PC-3 (cell line): ENCODE measurements at regions of chr1 and their contacts with region 1.

Region 1: GRCh38 chr1:172429331-172430127 is 9.0 kb downstream of the C1orf105 start:
- DNase-seq: peak; percentile 99
- ATAC-seq: peak; percentile 76
- H3K4me3 ChIP-seq: no peak overlapping the region
- H3K27ac ChIP-seq: no peak overlapping the region
- H3K4me1 ChIP-seq: peaks cover 20% of the 10 kb centered on the region
- H3K27me3 ChIP-seq: no peaks in the 10 kb centered on the region
- CTCF ChIP-seq: peak; percentile 100

Region 2: DNA sequence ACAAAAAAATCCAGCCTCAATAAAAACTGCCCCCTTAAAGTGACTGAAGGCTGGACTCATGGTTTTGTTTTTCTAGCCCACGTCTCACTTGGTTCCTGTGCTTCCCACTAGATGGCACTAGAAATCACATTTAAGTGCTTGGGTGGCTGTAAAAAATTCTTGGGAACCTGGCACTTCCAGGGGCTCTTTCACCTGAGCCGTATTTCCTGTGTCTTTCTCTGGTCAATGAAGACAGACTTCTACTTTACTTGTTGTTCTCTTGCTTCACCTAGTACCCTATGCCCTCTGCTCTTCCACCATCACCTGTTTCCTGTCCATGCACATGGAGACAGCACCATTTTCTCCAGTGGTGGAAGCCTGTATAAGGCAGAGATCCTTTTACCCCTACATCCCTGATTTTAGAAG is 628.0 kb before region 1 on chr1:
- CTCF ChIA-PET with region 1: no interaction called
- POLR2A ChIA-PET with region 1: no interaction called
- intact Hi-C with region 1: loop called (anchors 2 kb)
- DNase-seq: peak; percentile 88
- ATAC-seq: peak; percentile 74
- H3K4me3 ChIP-seq: no peak overlapping the region
- H3K27ac ChIP-seq: no peak overlapping the region
- H3K4me1 ChIP-seq: no peaks in the 10 kb centered on the region
- H3K27me3 ChIP-seq: no peaks in the 10 kb centered on the region
- CTCF ChIP-seq: peak; percentile 99

Region 3: DNA sequence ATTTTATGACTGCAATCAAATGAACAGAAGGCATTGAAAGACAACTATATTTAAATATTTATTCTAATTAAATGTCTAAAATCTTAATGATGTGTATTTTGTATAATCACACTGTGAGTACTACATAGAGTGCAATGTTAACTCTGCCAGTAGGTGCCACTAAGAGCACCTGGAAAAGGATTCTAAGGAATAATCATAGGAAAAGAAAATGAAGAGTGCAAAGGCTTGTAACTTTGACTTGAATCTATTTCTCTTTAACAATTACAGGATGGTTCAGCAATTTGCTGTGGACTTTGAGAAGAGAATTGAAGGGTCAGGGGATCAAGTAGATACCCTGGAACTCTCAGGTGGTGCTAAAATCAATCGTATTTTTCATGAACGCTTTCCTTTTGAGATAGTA is 387.8 kb before region 1 on chr1:
- CTCF ChIA-PET with region 1: interaction called, 3 read pairs
- POLR2A ChIA-PET with region 1: no interaction called
- intact Hi-C with region 1: loop called (anchors 1 kb)
- DNase-seq: peak; percentile 72
- ATAC-seq: peak; percentile 48
- H3K4me3 ChIP-seq: no peak overlapping the region
- H3K27ac ChIP-seq: no peak overlapping the region
- H3K4me1 ChIP-seq: peaks cover 19% of the 10 kb centered on the region
- H3K27me3 ChIP-seq: no peaks in the 10 kb centered on the region
- CTCF ChIP-seq: peak; percentile 80

Region 4: DNA sequence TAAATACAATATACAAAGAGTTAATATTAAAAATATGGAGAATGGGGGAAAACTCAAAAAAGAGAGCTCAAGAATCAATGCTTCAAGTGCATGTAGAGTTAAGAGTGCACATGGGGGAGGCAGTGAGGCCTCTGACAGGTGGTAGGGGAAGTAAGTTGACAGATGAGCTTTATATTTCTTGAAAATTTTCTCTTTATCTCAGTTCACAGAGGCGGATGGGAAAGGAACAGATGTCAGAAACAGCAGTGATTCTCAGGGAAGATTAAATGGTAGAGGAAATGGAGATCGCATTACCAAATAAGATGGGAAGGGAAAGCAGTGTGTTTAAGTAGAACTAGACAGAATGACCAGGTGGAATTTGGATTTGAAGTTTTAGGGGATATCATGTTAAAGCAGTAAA is 209.2 kb before region 1 on chr1:
- CTCF ChIA-PET with region 1: no interaction called
- POLR2A ChIA-PET with region 1: no interaction called
- intact Hi-C with region 1: no loop called
- DNase-seq: no peak
- ATAC-seq: no peak
- H3K4me3 ChIP-seq: no peak overlapping the region
- H3K27ac ChIP-seq: no peak overlapping the region
- H3K4me1 ChIP-seq: no peaks in the 10 kb centered on the region
- H3K27me3 ChIP-seq: no peaks in the 10 kb centered on the region
- CTCF ChIP-seq: no peak

Region 5: GRCh38 chr1:172443626-172444453 is 14.3 kb after region 1 on chr1 and contains the start of gene PIGC:
- CTCF ChIA-PET with region 1: interaction called, 7 read pairs
- POLR2A ChIA-PET with region 1: interaction called, 3 read pairs
- intact Hi-C with region 1: loop called (anchors 1 kb)
- DNase-seq: peak; percentile 99
- ATAC-seq: peak; percentile 76
- H3K4me3 ChIP-seq: peak within 1 kb of the TSS; percentile 75
- H3K27ac ChIP-seq: peak within 1 kb of the TSS; percentile 69
- H3K4me1 ChIP-seq: peaks cover 47% of the 10 kb centered on the region
- H3K27me3 ChIP-seq: no peaks in the 10 kb centered on the region
- CTCF ChIP-seq: peak; percentile 100
- total RNA-seq, gene PIGC: 57.5 and 70.5 TPM in 2 replicates

Region 6: GRCh38 chr1:172719694-172720138 is 290.2 kb after region 1 on chr1:
- CTCF ChIA-PET with region 1: interaction called, 13 read pairs
- POLR2A ChIA-PET with region 1: no interaction called
- intact Hi-C with region 1: loop called (anchors 1 kb)
- DNase-seq: peak; percentile 97
- ATAC-seq: peak; percentile 81
- H3K4me3 ChIP-seq: no peak overlapping the region
- H3K27ac ChIP-seq: no peak overlapping the region
- H3K4me1 ChIP-seq: peaks cover 32% of the 10 kb centered on the region
- H3K27me3 ChIP-seq: no peaks in the 10 kb centered on the region
- CTCF ChIP-seq: peak; percentile 100